Activated CD8-positive, alpha-beta T cell treated with anti-CD3 and anti-CD28 coated beads for 36 hours (primary cell): ENCODE measurements at regions of chr6 and their contacts with region 1.

Region 1: GRCh38 chr6:2848851-2849250 is 7.2 kb upstream of the SERPINB1 start:
- DNase-seq: peak; percentile 85
- ATAC-seq: peak; percentile 66
- H3K4me3 Mint-ChIP-seq: peak overlapping the region; percentile 41
- H3K27ac Mint-ChIP-seq: peak overlapping the region; percentile 82
- H3K4me1 Mint-ChIP-seq: peaks cover 56% of the 10 kb centered on the region
- H3K27me3 Mint-ChIP-seq: no peaks in the 10 kb centered on the region
- CTCF ChIP-seq: no peak

Region 2: GRCh38 chr6:2658788-2659187 is 190.1 kb before region 1 on chr6:
- CTCF ChIA-PET with region 1: no interaction called
- POLR2A ChIA-PET with region 1: no interaction called
- intact Hi-C with region 1: no loop called
- DNase-seq: peak; percentile 10
- ATAC-seq: peak; percentile 17
- H3K4me3 Mint-ChIP-seq: no peak overlapping the region
- H3K27ac Mint-ChIP-seq: no peak overlapping the region
- H3K4me1 Mint-ChIP-seq: peaks cover 11% of the 10 kb centered on the region
- H3K27me3 Mint-ChIP-seq: no peaks in the 10 kb centered on the region
- CTCF ChIP-seq: no peak

Region 3: DNA sequence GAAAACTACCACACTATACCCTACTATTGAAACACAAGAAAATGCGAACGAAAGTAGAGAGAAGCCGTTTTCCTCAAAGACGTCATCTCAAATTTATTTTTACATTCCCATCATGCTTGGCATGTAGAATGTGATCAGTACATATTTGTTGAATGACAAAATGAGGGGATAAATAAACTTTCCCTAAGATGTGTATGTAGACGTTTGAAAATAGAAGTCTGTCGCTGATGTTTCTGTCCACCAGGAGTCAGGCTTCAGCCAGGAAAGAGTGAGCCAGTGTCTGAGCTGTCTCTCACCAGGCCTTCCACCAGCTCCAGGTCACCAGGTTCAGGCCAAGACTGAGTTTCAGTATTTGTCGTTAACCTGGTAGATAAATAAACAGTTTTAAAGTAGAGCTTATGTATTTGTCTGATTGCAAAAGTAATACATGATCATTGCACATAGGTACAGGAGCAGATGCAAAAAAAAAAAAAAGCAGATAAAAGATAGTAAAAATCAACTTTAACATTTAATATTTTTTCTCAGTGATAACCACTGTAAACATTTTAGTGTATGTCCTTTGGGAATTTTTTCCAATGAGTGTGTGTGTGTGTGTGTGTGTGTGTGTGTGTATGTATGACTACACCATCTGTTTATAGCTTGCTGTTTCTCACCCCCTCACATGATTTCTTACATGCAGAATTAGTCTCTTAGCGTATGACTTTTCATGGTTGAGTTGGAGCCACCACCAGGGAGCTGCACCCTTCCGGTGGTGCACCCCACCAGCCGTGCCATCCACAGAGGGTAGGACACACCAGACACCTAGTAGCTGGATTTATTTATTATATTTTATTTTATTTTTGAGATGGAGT is 57.5 kb before region 1 on chr6:
- CTCF ChIA-PET with region 1: interaction called, 56 read pairs
- POLR2A ChIA-PET with region 1: no interaction called
- intact Hi-C with region 1: no loop called
- DNase-seq: peak; percentile 79
- ATAC-seq: peak; percentile 77
- H3K4me3 Mint-ChIP-seq: no peak overlapping the region
- H3K27ac Mint-ChIP-seq: peak overlapping the region; percentile 80
- H3K4me1 Mint-ChIP-seq: peaks cover 36% of the 10 kb centered on the region
- H3K27me3 Mint-ChIP-seq: no peaks in the 10 kb centered on the region
- CTCF ChIP-seq: peak; percentile 83

Region 4: DNA sequence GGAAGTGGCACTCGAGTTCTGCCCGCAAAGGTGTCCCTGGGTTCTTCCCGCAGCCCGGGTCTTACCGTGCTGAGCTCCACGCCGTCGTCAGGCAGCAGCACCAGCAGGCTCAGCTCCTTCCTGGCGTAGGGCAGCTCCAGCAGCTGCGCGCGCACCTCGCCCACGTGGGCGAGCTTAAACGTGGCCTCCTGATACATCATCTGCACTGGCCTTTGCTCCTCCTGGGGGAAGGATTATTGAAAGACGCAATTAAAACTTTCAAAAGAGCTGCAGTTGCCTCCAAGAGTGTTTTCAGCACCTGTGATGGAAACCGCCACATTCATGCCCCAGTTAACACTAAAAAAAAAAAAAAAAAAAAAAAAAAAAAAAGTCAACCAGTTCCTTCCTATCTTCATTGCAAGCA is 42.9 kb after region 1 on chr6:
- CTCF ChIA-PET with region 1: interaction called, 15 read pairs
- POLR2A ChIA-PET with region 1: interaction called, 3 read pairs
- intact Hi-C with region 1: no loop called
- DNase-seq: peak; percentile 87
- ATAC-seq: peak; percentile 92
- H3K4me3 Mint-ChIP-seq: peak overlapping the region; percentile 78
- H3K27ac Mint-ChIP-seq: peak overlapping the region; percentile 82
- H3K4me1 Mint-ChIP-seq: peaks cover 62% of the 10 kb centered on the region
- H3K27me3 Mint-ChIP-seq: no peaks in the 10 kb centered on the region
- CTCF ChIP-seq: no peak

Region 5: GRCh38 chr6:2911171-2911570 is 62.3 kb after region 1 on chr6:
- CTCF ChIA-PET with region 1: interaction called, 47 read pairs
- POLR2A ChIA-PET with region 1: interaction called, 4 read pairs
- intact Hi-C with region 1: loop called (anchors 2 kb)
- DNase-seq: no peak
- ATAC-seq: no peak
- H3K4me3 Mint-ChIP-seq: no peak overlapping the region
- H3K27ac Mint-ChIP-seq: no peak overlapping the region
- H3K4me1 Mint-ChIP-seq: peaks cover 47% of the 10 kb centered on the region
- H3K27me3 Mint-ChIP-seq: no peaks in the 10 kb centered on the region
- CTCF ChIP-seq: no peak

Region 6: DNA sequence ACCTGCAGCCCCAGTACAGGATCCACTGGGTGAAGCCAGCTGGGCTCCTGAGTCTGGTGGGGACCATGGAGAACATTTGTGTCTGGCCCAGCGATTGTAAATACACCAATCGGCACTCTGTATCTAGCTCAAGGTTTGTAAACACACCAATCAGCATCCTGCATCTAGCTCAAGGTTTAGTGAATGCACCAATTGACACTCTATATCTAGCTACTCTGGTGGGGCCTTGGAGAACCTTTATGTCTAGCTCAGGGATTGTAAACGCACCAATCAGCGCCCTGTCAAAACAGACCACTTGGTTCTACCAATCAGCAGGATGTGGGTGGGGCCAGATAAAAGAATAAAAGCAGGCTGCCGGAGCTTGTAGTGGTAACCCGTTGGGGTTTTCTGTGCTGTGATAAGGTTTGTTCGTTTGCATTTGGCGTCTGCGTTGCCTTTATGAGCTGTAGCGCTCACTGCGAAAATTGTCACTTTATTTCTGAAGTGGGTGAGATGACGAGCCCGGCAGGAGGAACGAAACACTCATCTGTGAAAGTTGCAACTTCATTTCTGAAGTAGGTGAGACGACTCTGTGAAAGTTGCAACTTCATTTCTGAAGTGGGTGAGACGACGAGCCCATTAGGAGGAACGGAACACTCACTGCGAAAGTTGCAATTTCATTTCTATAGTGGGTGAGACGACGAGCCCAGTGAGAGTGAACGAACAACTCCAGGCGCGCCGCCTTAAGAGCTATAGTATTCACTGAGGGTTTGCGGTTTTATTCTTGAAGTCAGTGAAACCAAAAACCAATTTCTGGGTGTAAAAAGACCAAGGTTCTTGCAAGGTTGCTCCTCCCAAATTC is 91.4 kb after region 1 on chr6:
- CTCF ChIA-PET with region 1: interaction called, 180 read pairs
- POLR2A ChIA-PET with region 1: interaction called, 4 read pairs
- intact Hi-C with region 1: loop called (anchors 2 kb)
- DNase-seq: peak; percentile 94
- ATAC-seq: peak; percentile 88
- H3K4me3 Mint-ChIP-seq: peak overlapping the region; percentile 54
- H3K27ac Mint-ChIP-seq: peak overlapping the region; percentile 96
- H3K4me1 Mint-ChIP-seq: peaks cover 66% of the 10 kb centered on the region
- H3K27me3 Mint-ChIP-seq: no peaks in the 10 kb centered on the region
- CTCF ChIP-seq: no peak

Region 7: DNA sequence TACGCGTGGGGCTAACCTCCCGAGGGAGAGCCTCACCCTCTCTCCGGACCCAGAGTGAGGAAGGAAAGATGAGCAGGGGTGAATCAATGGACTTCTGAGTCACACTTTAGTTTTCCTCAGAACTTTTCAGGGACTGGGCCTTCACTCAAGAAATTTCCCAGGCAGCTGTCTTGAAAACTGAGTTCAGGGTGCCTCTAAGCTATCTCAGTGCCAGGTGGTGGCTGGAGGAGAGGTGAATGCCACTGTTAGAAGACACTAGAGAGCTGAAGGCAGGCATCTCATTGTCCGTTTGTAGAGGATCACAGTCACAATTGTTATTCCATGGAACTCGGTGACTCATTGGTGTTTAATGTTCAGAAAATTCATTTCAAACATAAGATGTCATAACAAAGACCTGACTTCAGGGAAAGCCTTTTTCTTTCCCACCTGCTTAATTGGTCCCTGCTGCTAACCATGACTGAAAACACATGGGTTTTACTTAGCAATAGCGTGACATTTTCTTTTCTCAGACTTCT is 127.8 kb after region 1 on chr6:
- CTCF ChIA-PET with region 1: interaction called, 12 read pairs
- POLR2A ChIA-PET with region 1: interaction called, 6 read pairs
- intact Hi-C with region 1: no loop called
- DNase-seq: no peak
- ATAC-seq: no peak
- H3K4me3 Mint-ChIP-seq: no peak overlapping the region
- H3K27ac Mint-ChIP-seq: peak overlapping the region; percentile 66
- H3K4me1 Mint-ChIP-seq: peaks cover 40% of the 10 kb centered on the region
- H3K27me3 Mint-ChIP-seq: peaks cover 2% of the 10 kb centered on the region
- CTCF ChIP-seq: no peak